Panc1 (cell line): ENCODE measurements at regions of chr15 and their contacts with region 1.

Region 1: GRCh38 chr15:46556010-46556409 is 921.2 kb downstream of the SQOR start:
- DNase-seq: no peak
- ATAC-seq: no peak
- H3K4me3 ChIP-seq: no peak overlapping the region
- H3K27ac ChIP-seq: no peak overlapping the region
- H3K4me1 ChIP-seq: no peaks in the 10 kb centered on the region
- H3K27me3 ChIP-seq: no peaks in the 10 kb centered on the region
- CTCF ChIP-seq: no peak

Region 2: DNA sequence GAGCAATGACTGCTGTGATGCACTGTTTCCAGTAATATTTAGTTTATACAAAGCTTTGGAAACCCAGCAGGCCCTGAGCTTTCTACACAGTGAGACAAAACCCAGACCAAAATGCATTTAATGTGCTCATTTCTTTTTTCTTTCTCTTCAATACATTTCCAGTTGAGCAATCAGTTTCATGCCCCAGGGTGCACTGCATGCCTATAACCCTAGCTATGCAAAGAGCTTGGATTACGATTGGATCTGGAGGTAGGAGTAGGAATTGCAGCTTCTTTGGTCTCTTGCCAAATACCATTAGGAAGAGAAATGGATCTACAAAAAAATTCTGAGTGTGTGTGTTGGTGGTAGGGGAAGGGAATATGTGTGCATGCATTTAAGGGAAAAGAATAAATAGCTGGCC is 80.2 kb after region 1 on chr15:
- CTCF ChIA-PET with region 1: no interaction called
- POLR2A ChIA-PET with region 1: no interaction called
- in situ Hi-C with region 1: no loop called
- intact Hi-C with region 1: no loop called
- DNase-seq: no peak
- ATAC-seq: no peak
- H3K4me3 ChIP-seq: no peak overlapping the region
- H3K27ac ChIP-seq: no peak overlapping the region
- H3K4me1 ChIP-seq: no peaks in the 10 kb centered on the region
- H3K27me3 ChIP-seq: no peaks in the 10 kb centered on the region
- CTCF ChIP-seq: no peak

Region 3: DNA sequence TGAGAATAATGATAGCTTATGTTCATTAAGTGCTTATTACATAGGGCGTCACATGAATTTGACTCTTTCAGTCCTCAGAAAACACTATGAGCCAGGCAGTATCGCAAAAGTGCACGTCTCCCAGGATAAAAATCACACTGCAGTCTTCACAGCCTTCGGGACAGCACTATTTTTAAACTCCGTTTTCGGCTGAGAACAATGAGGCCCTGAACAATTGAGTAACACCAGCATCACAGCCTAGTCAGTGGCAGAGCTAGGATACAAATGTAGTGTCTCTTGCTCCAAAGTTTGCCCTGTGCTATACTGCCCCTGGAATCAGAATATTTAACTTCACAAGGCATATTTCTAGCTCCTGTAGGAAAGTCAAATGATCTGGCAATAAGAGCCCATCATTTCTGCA is 309.1 kb after region 1 on chr15:
- CTCF ChIA-PET with region 1: no interaction called
- POLR2A ChIA-PET with region 1: no interaction called
- in situ Hi-C with region 1: no loop called
- intact Hi-C with region 1: no loop called
- DNase-seq: no peak
- ATAC-seq: no peak
- H3K4me3 ChIP-seq: no peak overlapping the region
- H3K27ac ChIP-seq: no peak overlapping the region
- H3K4me1 ChIP-seq: no peaks in the 10 kb centered on the region
- H3K27me3 ChIP-seq: no peaks in the 10 kb centered on the region
- CTCF ChIP-seq: no peak

Region 4: GRCh38 chr15:47929138-47929803 is 1373.3 kb after region 1 on chr15:
- CTCF ChIA-PET with region 1: interaction called, 12 read pairs
- POLR2A ChIA-PET with region 1: no interaction called
- in situ Hi-C with region 1: no loop called
- intact Hi-C with region 1: no loop called
- DNase-seq: no peak
- ATAC-seq: no peak
- H3K4me3 ChIP-seq: no peak overlapping the region
- H3K27ac ChIP-seq: no peak overlapping the region
- H3K4me1 ChIP-seq: no peaks in the 10 kb centered on the region
- H3K27me3 ChIP-seq: no peaks in the 10 kb centered on the region
- CTCF ChIP-seq: no peak